Aorta (tissue), 5 donors: ENCODE measurements at regions of chr15 and their contacts with region 1.

Region 1: DNA sequence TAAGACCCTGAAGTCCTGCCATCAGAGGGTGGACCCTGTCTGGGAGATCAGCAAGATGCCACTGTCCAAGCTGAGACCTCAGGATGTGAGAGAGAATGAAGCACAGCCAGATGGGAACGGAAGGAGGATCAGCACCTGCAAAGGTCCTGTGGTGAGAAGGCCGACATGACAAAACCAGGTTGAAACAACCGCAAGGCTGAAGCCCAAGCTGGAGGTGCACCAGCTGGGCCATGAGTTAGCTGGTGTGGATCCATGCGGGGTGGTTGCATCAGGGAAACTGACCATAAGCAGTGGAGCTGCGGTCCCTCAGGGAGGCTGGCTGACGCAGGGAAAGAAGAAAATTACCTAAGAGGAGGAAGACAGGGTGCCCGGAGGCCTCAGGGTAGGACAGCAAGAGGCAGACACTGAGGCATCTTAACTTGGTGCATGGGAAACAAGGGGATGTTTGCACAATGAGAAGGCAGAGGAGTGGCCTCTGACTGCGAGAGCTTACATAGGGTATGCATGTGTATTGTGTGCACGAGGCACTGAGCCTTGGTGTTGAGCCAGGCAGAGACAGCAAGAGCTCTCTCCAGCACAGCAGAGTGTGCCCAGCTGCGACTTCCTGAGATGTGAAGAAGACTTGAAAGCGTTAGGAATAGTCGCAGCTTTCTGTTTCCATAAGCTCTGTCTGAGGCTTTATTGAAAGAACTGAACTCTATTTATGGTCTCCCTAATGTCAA is 497.7 kb downstream of the OCA2 start:
- DNase-seq: no peak
- ATAC-seq: no peak
- H3K4me3 ChIP-seq: no peak overlapping the region
- H3K27ac ChIP-seq: no peak overlapping the region
- H3K4me1 ChIP-seq: no peaks in the 10 kb centered on the region
- H3K27me3 ChIP-seq: no peaks in the 10 kb centered on the region

Region 2: GRCh38 chr15:27549746-27550145 is 51.7 kb before region 1 on chr15:
- intact Hi-C with region 1: loop called in 1 of 2 experiments (anchors 5 kb)
- DNase-seq: no peak
- ATAC-seq: no peak
- H3K4me3 ChIP-seq: no peak overlapping the region
- H3K27ac ChIP-seq: no peak overlapping the region
- H3K4me1 ChIP-seq: no peaks in the 10 kb centered on the region
- H3K27me3 ChIP-seq: no peaks in the 10 kb centered on the region

Region 3: DNA sequence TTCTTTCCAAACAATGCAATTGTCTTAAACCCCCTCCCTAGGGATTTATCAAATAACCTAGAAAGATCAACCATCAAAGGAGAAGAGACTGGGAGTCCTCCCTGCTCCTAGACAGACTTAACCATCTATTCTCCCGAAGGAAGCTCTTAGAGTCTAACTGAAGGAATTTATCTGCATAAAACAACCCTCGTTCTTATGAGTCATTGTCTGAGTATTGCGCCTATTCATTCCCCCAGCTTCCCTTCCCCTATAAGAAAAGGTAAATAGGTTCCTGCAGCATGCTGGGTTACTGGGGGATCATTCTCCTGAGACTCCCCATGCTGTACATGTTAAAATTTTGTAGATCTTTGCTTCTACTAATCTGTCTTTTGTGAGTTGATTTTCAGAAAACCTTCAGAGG is 85.0 kb after region 1 on chr15:
- intact Hi-C with region 1: no loop called
- DNase-seq: no peak
- ATAC-seq: no peak
- H3K4me3 ChIP-seq: no peak overlapping the region
- H3K27ac ChIP-seq: no peak overlapping the region
- H3K4me1 ChIP-seq: no peaks in the 10 kb centered on the region
- H3K27me3 ChIP-seq: no peaks in the 10 kb centered on the region